MCF 10A (cell line): ENCODE measurements at regions of chr9 and their contacts with region 1.

Region 1: DNA sequence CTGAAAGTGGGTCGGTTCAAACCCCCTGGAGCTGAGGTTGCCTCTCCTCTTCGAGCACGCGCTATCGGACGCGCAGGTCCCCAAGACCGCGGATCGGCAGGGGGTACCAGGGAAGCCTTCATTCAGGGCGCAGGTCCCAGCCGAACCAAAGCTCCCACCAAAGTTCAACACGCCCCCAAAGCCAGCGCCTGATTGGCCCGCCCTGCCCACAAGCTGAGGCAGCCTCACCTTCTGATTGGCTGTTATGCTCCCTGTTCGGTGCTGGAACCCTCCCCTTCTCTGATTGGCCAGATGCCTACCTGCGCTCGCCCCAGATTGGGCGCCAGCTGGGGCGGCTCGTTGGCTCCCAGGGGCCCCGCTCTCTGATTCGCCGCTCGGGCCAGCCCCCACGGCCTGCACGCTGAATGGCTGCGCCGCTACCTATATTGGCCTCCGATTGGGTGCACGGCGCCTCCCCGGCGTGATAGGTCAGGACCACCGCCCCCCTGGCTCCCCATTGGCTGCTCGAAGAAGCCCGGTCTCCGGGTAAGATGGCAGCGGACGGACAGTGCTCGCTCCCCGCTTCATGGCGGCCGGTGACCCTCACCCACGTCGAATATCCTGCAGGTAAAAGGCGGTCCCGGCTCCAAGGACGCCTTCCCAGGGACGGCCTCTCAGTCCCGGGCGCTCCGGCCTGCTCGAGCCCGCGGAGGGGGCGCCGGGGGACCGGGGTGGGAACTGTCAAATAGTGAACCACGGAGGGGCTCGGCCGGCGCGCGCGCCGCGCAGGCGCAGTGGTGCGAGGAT is at the start of gene DOLPP1:
- DNase-seq: peak; percentile 99
- H3K4me3 Mint-ChIP-seq: peak within 1 kb of the TSS; percentile 84
- H3K27ac Mint-ChIP-seq: peak within 1 kb of the TSS; percentile 46
- H3K4me1 Mint-ChIP-seq: peaks cover 10% of the 10 kb centered on the region
- H3K27me3 Mint-ChIP-seq: no peaks in the 10 kb centered on the region
- CTCF ChIP-seq: no peak
- total RNA-seq, gene DOLPP1: 16.3 and 18.5 TPM in 2 replicates

Region 2: GRCh38 chr9:128625391-128626145 is 455.2 kb before region 1 on chr9:
- CTCF ChIA-PET with region 1: no interaction called
- POLR2A ChIA-PET with region 1: no interaction called
- intact Hi-C with region 1: no loop called
- DNase-seq: no peak
- H3K4me3 Mint-ChIP-seq: no peak overlapping the region
- H3K27ac Mint-ChIP-seq: no peak overlapping the region
- H3K4me1 Mint-ChIP-seq: no peaks in the 10 kb centered on the region
- H3K27me3 Mint-ChIP-seq: no peaks in the 10 kb centered on the region
- CTCF ChIP-seq: no peak

Region 3: DNA sequence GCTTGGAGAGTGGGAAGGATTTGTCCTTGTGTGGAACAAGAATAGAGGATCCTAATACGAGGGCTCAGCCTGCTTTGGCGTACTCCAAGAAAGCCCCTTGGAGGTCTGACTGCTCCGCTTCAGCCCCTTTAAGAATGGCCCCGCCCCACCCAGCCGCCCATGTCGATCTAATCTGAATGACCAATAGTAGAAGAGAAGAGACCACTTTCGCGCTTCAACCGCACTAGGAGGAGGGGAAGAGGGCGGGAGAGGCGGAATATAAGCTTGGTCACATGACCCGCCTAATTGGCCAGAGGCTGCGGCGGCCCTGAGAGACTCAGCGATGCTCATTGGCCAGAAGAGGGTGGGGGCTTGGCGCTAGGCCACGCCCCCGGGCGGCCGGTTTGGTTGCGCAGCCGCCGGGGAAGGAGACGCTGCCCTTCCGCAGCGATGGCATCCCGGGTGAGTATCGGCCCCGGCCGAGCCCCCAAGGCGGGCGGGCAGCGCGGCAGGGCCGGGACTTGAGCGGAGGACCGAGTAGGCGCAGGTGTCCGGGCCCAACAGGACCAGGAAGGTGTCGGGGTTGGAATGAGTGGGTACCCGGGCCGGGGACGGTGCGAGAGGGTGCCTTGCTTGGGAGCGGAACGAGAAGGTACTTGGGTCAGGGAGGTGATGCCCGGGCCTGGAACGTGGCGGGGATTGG is 44.4 kb before region 1 on chr9 and contains the start of gene MIGA2:
- CTCF ChIA-PET with region 1: interaction called, 3 read pairs
- POLR2A ChIA-PET with region 1: interaction called, 10 read pairs
- intact Hi-C with region 1: no loop called
- DNase-seq: peak; percentile 99
- H3K4me3 Mint-ChIP-seq: peak within 1 kb of the TSS; percentile 97
- H3K27ac Mint-ChIP-seq: peak within 1 kb of the TSS; percentile 89
- H3K4me1 Mint-ChIP-seq: peaks cover 17% of the 10 kb centered on the region
- H3K27me3 Mint-ChIP-seq: no peaks in the 10 kb centered on the region
- CTCF ChIP-seq: no peak
- total RNA-seq, gene MIGA2: 28.6 and 28.7 TPM in 2 replicates